ENCODE measurements at regions of chr19 and their contacts with region 1.

Region 1: GRCh38 chr19:3670796-3671679 is 29.2 kb downstream of the PIP5K1C start:
- DNase-seq: peak; percentile 84 to 93
- ATAC-seq: peak; percentile 65 to 88 (median 81)
- H3K4me3 ChIP-seq: peak overlapping the region in 9 of 10 donors; percentile 28 to 52 (median 38)
- H3K27ac ChIP-seq: peak overlapping the region; percentile 90 to 100 (median 99)
- H3K4me1 ChIP-seq: peaks cover 24 to 75% (median 55%) of the 10 kb centered on the region in 9 donors
- H3K27me3 ChIP-seq: peaks cover 0 to 10% (median 0%) of the 10 kb centered on the region in 7 donors
- CTCF ChIP-seq: no peak

Region 2: GRCh38 chr19:3683405-3684053 is 12.5 kb after region 1 on chr19:
- intact Hi-C with region 1: loop called in 1 of 10 experiments (anchors 1 kb)
- DNase-seq: peak; percentile 56 to 63
- ATAC-seq: peak; percentile 41 to 93 (median 82)
- H3K4me3 ChIP-seq: peak overlapping the region in 1 of 10 donors; percentile 2
- H3K27ac ChIP-seq: peak overlapping the region; percentile 62 to 86 (median 80)
- H3K4me1 ChIP-seq: peaks cover 4 to 48% (median 24%) of the 10 kb centered on the region in 9 donors
- H3K27me3 ChIP-seq: no peaks in the 10 kb centered on the region
- CTCF ChIP-seq: no peak